A549 (cell line): ENCODE measurements at regions of chr20 and their contacts with region 1.

Region 1: GRCh38 chr20:63230800-63231268 is 4.9 kb upstream of the BIRC7 start:
- DNase-seq: peak in 1 of 2 experiments; percentile 56
- ATAC-seq: no peak
- H3K4me3 ChIP-seq: no peak overlapping the region
- H3K27ac ChIP-seq: peak overlapping the region; percentile 96 to 99
- H3K4me1 ChIP-seq: peaks cover 90% of the 10 kb centered on the region
- CTCF ChIP-seq: no peak
- EP300 ChIP-seq: no peak
- POLR2A ChIP-seq: no peak
- RAD21 ChIP-seq: no peak

Region 2: GRCh38 chr20:63246490-63247288 is 15.9 kb after region 1 on chr20:
- CTCF ChIA-PET with region 1: interaction called, 154 read pairs
- POLR2A ChIA-PET with region 1: no interaction called
- DNase-seq: no peak
- ATAC-seq: no peak
- H3K4me3 ChIP-seq: no peak overlapping the region
- H3K27ac ChIP-seq: peak overlapping the region in 1 of 2 experiments; percentile 63; a peak in 3 of 6 replicates
- H3K4me1 ChIP-seq: peaks cover 32% of the 10 kb centered on the region
- CTCF ChIP-seq: no peak
- EP300 ChIP-seq: no peak
- POLR2A ChIP-seq: no peak
- RAD21 ChIP-seq: no peak

Region 3: DNA sequence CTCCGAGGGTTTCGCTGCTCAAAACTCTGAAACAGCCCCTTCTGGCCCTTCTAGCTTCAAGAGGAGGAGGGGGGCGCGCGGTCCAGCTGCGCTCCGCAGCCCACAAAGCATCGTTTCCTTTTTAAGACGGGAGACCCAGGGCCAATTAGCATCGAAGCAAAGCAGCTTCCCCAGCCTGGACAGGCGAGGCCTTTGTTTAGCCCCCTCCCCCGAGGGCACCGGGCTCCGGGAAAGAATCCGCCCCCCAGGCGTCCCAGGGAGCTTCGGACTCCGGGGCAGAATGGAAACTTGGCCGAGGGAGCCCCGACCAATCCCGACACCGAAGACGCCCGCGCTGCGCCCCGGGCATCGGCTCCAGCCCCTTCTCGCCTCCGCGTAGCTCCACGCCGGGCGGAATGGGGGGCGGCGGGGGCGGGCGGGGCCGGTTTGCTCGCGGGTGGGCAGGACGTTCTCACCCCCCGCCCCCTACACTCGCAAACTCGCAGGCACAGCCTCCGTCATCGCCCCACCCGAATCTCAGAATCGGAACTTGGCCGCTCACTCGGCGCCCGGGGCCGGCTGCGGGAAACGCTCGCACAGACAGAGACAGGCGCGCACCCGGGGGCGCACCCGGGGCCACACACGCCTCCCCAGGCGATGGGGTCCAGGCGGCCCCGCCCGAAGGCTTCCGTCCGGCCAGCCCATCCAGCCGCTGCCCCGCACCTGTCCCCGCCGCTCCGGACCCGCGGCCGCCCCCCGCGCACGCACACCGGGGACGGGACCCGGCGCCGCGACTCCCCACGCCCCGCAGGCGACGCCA is 22.8 kb after region 1 on chr20:
- CTCF ChIA-PET with region 1: interaction called, 154 read pairs
- POLR2A ChIA-PET with region 1: no interaction called
- DNase-seq: peak in 1 of 2 experiments; percentile 45
- ATAC-seq: peak; percentile 7 to 41; a peak in 3 of 6 replicates
- H3K4me3 ChIP-seq: peak overlapping the region; percentile 50
- H3K27ac ChIP-seq: peak overlapping the region; percentile 67 to 94
- H3K4me1 ChIP-seq: peaks cover 54% of the 10 kb centered on the region
- CTCF ChIP-seq: no peak
- EP300 ChIP-seq: no peak
- POLR2A ChIP-seq: no peak
- RAD21 ChIP-seq: no peak